Mammary epithelial cell (primary cell): ENCODE measurements at regions of chr18 and their contacts with region 1.

Region 1: GRCh38 chr18:36809590-36810381 is 19.0 kb downstream of the TPGS2 start:
- DNase-seq: peak; percentile 54
- H3K4me3 ChIP-seq: no peak overlapping the region
- H3K27ac ChIP-seq: no peak overlapping the region
- H3K4me1 ChIP-seq: no peaks in the 10 kb centered on the region
- H3K27me3 ChIP-seq: no peaks in the 10 kb centered on the region
- CTCF ChIP-seq: peak; percentile 76 to 83

Region 2: GRCh38 chr18:36411745-36412168 is 398.0 kb before region 1 on chr18:
- CTCF ChIA-PET with region 1: no interaction called
- dilution Hi-C with region 1: no loop called
- in situ Hi-C with region 1: no loop called
- intact Hi-C with region 1: loop called (anchors 5 kb)
- DNase-seq: no peak
- H3K4me3 ChIP-seq: no peak overlapping the region
- H3K27ac ChIP-seq: no peak overlapping the region
- H3K4me1 ChIP-seq: peaks cover 4% of the 10 kb centered on the region
- H3K27me3 ChIP-seq: no peaks in the 10 kb centered on the region
- CTCF ChIP-seq: peak; percentile 48 to 63

Region 3: GRCh38 chr18:36688020-36688965 is 121.5 kb before region 1 on chr18:
- CTCF ChIA-PET with region 1: no interaction called
- dilution Hi-C with region 1: no loop called
- in situ Hi-C with region 1: no loop called
- intact Hi-C with region 1: loop called (anchors 1 kb)
- DNase-seq: peak; percentile 60
- H3K4me3 ChIP-seq: no peak overlapping the region
- H3K27ac ChIP-seq: no peak overlapping the region
- H3K4me1 ChIP-seq: no peaks in the 10 kb centered on the region
- H3K27me3 ChIP-seq: no peaks in the 10 kb centered on the region
- CTCF ChIP-seq: peak; percentile 82 to 97

Region 4: GRCh38 chr18:36769611-36770314 is 40.0 kb before region 1 on chr18:
- CTCF ChIA-PET with region 1: no interaction called
- dilution Hi-C with region 1: no loop called
- in situ Hi-C with region 1: no loop called
- intact Hi-C with region 1: loop called (anchors 1 kb)
- DNase-seq: no peak
- H3K4me3 ChIP-seq: no peak overlapping the region
- H3K27ac ChIP-seq: no peak overlapping the region
- H3K4me1 ChIP-seq: peaks cover 3% of the 10 kb centered on the region
- H3K27me3 ChIP-seq: no peaks in the 10 kb centered on the region
- CTCF ChIP-seq: peak; percentile 36 to 37